Ascending aorta (tissue), 2 donors: ENCODE measurements at regions of chr12 and their contacts with region 1.

Region 1: DNA sequence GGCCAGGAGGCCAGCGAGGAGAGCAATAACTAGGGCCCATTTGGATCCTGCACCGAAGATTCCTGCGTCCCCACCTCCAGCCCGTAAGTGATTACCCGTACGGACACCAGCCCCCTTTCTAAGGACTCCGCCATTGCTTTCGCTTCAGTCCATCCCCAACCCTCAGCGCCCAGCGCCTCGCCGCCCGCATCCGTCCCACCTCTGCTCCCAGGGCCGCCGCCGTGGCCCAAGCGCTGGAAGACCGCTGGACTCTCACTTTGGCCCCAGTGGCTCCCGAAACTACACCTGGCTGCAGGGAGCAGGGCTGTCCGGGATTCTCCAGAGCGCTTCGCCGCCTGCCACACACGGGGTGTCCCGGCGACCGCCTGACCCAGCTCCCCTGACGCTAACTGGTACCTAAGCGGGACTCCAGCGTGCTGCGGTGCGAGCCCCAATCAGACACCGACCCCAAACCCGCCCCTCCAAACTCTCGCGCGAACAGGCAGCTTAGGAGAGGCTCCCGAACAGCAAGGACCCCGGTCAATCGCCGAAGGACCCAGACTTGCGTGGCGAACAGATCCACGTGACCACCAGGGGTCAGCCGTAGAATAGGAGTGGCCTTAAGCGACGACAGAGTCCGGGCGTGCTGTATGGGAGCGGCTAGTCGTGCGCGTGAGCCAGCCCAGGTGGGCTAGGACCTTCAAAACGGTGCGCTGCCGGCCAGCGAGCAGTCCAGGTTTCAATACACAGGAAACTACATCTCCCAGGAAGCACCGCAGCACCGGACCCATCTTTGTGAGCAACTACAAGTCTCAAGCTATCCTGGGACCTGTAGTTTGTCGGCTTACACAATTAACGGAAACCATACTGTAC is at the start of gene CNPY2:
- DNase-seq: peak; percentile 90 to 98
- H3K4me3 ChIP-seq: peak within 1 kb of the TSS; percentile 74 to 79
- H3K27ac ChIP-seq: peak within 1 kb of the TSS; percentile 80 to 91
- H3K4me1 ChIP-seq: peaks cover 7 to 10% of the 10 kb centered on the region in 2 donors
- H3K27me3 ChIP-seq: no peaks in the 10 kb centered on the region
- CTCF ChIP-seq: peak in 2 of 3 experiments; percentile 6 to 16
- total RNA-seq, gene CNPY2: 34.6 TPM

Region 2: DNA sequence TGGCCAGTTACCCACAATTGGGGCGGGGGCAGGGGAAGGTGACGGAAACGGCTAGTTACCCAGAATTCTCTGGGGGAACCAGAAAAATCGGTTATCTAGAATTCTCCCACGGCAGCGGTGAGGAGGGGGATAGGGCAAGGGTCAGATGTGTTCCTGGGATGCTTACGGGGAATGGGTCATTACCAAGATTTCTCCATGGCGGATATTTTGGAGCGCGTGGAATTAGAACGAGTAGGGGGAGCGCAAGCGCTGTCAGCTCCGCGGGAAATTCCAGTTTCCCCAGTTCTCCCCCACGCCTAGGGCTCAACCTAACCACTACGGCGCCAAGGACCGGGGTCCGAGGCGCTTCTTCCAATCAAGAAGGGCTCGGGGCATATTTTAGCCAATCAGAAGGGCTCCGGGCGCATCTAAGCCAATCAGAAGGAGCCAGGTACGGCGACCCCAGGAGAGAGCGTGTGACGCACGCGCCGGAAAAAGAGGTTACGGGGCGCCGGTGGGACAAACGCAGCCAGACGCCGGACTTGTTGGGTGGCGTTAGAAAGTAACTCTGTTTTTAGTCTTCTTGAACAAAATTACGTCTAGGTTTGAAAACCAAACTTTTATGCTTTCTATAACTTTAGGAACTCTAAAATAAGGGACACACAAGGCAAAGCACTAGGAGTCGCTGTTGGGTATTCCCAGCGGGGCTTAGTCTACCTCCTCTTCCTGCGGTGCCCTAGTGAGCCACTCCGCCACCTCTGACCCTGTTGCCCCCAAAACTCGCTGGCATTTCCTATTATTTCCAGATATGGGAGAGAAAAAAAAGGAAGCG is 18.0 kb after region 1 on chr12 and contains the start of gene PAN2:
- intact Hi-C with region 1: loop called (anchors 1 kb)
- DNase-seq: peak; percentile 91 to 98
- H3K4me3 ChIP-seq: peak within 1 kb of the TSS; percentile 62 to 67
- H3K27ac ChIP-seq: peak within 1 kb of the TSS; percentile 94 to 99
- H3K4me1 ChIP-seq: peaks cover 3 to 6% of the 10 kb centered on the region in 2 donors
- H3K27me3 ChIP-seq: no peaks in the 10 kb centered on the region
- CTCF ChIP-seq: peak; percentile 43 to 63 (median 55)
- total RNA-seq, gene PAN2: 45.3 TPM

Region 3: DNA sequence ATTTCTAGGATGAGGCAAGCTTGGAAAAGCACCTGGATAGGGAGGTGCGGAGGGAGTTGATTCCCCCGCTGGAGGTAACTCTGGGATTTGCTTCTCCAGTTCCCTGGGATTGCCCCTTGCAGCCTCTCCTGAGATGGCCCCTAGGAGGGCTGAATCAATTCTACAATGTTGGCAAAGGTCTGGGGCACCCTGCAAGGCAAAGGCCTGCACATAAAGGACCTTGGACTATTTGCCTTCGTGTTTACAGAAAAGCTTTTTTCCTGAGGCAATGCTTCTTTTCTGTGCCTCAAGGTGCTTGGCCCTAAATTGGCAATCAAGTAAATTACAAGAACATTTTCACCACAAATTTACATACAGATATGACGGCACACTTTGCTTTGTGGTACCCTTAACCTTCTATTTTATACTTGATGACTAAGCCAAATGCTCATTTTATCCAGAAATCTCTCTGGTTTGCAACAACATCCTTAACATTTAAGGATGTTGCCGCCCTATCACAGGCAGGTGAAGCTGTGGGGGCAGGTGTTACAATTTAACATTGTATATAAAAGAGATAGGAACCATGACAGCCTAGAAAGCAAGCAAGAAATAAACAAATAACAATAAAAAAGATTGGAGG is 93.1 kb after region 1 on chr12:
- intact Hi-C with region 1: no loop called
- DNase-seq: no peak
- H3K4me3 ChIP-seq: no peak overlapping the region
- H3K27ac ChIP-seq: no peak overlapping the region
- H3K4me1 ChIP-seq: no peaks in the 10 kb centered on the region
- H3K27me3 ChIP-seq: no peaks in the 10 kb centered on the region
- CTCF ChIP-seq: no peak

Region 4: GRCh38 chr12:56468216-56469006 is 152.6 kb after region 1 on chr12 and contains the start of gene SPRYD4:
- intact Hi-C with region 1: loop called (anchors 1 kb)
- DNase-seq: peak; percentile 81 to 96
- H3K4me3 ChIP-seq: peak within 1 kb of the TSS; percentile 58 to 85
- H3K27ac ChIP-seq: peak within 1 kb of the TSS; percentile 78 to 90
- H3K4me1 ChIP-seq: peaks cover 0 to 16% of the 10 kb centered on the region in 2 donors
- H3K27me3 ChIP-seq: no peaks in the 10 kb centered on the region
- CTCF ChIP-seq: peak in 2 of 3 experiments; percentile 38 to 47
- total RNA-seq, gene SPRYD4: 0.43 TPM